ENCODE measurements at regions of chrX and their contacts with region 1.

Region 1: GRCh38 chrX:40647307-40648197 is at the start of gene CXorf38:
- DNase-seq: peak; percentile 94
- H3K4me3 Mint-ChIP-seq: peak within 1 kb of the TSS; percentile 96
- H3K27ac Mint-ChIP-seq: peak within 1 kb of the TSS; percentile 94
- H3K4me1 Mint-ChIP-seq: peaks cover 19% of the 10 kb centered on the region
- H3K27me3 Mint-ChIP-seq: no peaks in the 10 kb centered on the region
- total RNA-seq, gene CXorf38: 20.2 to 20.5 TPM

Region 2: DNA sequence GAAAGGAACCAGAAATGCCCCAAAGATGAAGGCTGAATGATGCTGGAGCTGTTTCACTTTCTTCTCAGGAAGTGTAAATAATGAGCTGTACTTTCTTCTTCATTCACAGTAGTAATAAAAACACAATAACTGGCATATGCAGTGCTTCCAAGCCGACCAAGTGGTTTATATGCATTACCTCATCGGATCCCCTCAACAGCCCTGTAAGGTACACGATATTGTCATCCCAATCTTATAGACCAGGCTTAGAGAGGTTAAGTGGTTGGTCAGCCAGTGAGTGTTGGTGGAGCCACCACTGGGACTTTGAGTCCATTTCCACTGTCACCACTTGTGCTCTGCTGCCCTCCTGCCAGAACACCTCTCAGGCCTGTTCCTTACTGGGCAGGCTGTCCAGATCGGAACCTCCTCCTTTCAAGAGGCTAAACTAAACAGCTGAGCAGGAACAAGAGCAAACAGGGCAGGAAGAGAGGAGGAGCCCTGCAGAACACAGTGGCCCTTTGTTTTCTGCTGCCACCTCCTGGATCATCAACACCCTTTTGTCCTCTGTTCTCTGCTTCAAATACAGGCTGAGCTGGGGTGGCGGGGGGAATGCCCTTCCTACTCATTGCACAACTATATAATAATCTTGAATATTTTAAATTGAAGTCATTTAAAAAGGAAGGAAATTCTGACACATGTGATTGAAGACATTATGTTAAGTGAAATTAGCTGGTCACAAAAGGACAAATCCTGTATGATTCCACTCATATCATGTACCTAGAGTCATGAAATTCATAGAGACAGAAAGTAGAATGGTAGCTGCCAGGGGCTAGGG is 179.3 kb before region 1 on chrX:
- CTCF ChIA-PET with region 1: no interaction called
- POLR2A ChIA-PET with region 1: no interaction called
- intact Hi-C with region 1: no loop called
- DNase-seq: peak; percentile 68
- H3K4me3 Mint-ChIP-seq: no peak overlapping the region
- H3K27ac Mint-ChIP-seq: no peak overlapping the region
- H3K4me1 Mint-ChIP-seq: peaks cover 29% of the 10 kb centered on the region
- H3K27me3 Mint-ChIP-seq: no peaks in the 10 kb centered on the region

Region 3: GRCh38 chrX:40735325-40736169 is 88.0 kb after region 1 on chrX and contains the start of gene MED14:
- CTCF ChIA-PET with region 1: interaction called, 4 read pairs
- POLR2A ChIA-PET with region 1: no interaction called
- intact Hi-C with region 1: loop called (anchors 1 kb)
- DNase-seq: peak; percentile 93
- H3K4me3 Mint-ChIP-seq: peak within 1 kb of the TSS; percentile 84
- H3K27ac Mint-ChIP-seq: peak within 1 kb of the TSS; percentile 92
- H3K4me1 Mint-ChIP-seq: peaks cover 44% of the 10 kb centered on the region
- H3K27me3 Mint-ChIP-seq: no peaks in the 10 kb centered on the region
- total RNA-seq, gene MED14: 46.4 to 49.4 TPM